Mammary epithelial cell (primary cell): ENCODE measurements at regions of chr2 and their contacts with region 1.

Region 1: DNA sequence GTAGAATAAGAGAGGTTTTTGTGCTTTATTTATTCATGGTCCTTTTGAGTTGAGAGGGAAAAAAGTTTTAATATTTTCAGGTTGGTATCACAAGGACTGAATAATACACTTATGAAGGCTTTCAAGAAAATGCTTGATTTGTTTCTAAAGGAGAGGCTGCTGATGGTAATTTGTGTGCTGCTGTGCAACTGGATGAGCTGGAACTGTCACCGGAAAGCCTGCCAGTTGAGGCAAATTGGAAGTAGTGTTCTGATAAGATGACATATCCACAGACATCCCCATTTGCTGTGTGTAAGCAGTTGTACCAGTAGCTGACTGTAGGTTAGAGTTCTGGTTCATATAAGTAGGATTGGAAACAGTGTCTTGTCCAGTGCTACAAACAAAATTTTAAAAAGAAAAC is 21.6 kb upstream of the CACNB4 start:
- DNase-seq: no peak
- H3K4me3 ChIP-seq: no peak overlapping the region
- H3K27ac ChIP-seq: no peak overlapping the region
- H3K4me1 ChIP-seq: no peaks in the 10 kb centered on the region
- H3K27me3 ChIP-seq: no peaks in the 10 kb centered on the region
- CTCF ChIP-seq: no peak

Region 2: GRCh38 chr2:152155209-152155608 is 34.8 kb after region 1 on chr2:
- CTCF ChIA-PET with region 1: no interaction called
- dilution Hi-C with region 1: loop called (anchors 5 kb)
- in situ Hi-C with region 1: no loop called
- intact Hi-C with region 1: no loop called
- DNase-seq: no peak
- H3K4me3 ChIP-seq: no peak overlapping the region
- H3K27ac ChIP-seq: no peak overlapping the region
- H3K4me1 ChIP-seq: no peaks in the 10 kb centered on the region
- H3K27me3 ChIP-seq: no peaks in the 10 kb centered on the region
- CTCF ChIP-seq: no peak